Head of caudate nucleus (tissue), 42 donors: ENCODE measurements at regions of chr14 and their contacts with region 1.

Region 1: DNA sequence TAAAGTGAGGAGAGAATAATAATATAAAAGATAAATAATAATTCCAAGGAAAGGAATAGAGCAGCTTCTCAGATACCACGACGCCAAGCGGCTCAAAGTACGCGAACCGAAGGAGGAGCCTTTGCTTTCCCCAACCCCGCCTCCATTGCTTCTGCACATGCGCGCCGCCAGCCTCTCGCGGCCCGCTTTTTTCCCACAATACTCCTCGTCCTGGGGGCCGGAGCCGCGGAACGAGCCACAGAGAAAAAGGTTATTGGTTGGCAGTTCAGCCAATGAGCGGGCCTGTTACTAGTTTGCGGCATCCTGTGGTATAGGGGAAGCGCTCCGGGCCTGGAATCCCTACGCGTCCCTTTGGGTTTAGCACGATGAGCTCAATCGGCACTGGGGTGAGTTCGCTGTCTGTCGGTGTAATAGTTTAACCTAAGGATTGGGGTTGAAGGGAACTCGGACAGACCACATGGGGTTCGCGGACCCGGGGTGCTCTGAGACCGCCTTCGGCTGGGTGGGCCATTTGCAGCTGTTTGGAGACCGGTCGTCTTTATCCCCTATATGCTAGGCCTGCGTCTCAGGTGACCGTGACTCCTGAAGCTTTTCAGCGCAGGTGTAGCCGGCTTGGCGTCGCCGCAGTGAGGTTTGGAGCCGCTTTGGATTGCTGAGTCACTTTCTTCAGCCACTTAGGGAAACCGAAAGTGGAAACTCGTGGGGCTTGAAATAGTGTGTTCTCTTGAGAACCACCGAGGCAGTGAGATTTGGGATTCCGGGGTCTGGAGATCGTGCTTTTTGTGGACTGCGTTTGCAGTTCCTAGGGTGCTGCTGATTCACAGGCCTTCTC is at the start of gene PSMA3:
- DNase-seq: peak; percentile 93 to 99 (median 98)

Region 2: GRCh38 chr14:58297762-58298476 is 53.1 kb after region 1 on chr14:
- intact Hi-C with region 1: loop called (anchors 2 kb)
- DNase-seq: peak; percentile 96 to 100 (median 99)

Region 3: DNA sequence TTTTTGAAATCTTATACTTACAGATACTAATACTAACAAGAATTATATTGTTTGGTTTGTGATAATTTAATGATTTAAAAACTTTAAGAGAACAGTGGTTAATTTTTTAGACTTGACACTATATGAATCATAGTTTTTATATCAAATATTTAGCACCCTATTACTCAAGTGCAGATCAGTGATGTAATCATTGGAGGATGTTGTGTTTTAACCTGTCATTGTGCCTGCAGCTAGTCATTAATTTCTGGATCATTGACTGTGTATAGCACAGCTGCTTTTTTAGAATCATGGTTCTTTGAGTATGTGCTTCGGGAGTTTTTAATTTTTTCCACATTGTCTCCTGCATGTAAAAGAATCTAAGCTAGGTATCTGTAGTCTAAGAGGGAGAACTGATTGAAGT is 70.8 kb after region 1 on chr14:
- intact Hi-C with region 1: no loop called
- DNase-seq: no peak